ENCODE measurements at regions of chr3 and their contacts with region 1.

Region 1: DNA sequence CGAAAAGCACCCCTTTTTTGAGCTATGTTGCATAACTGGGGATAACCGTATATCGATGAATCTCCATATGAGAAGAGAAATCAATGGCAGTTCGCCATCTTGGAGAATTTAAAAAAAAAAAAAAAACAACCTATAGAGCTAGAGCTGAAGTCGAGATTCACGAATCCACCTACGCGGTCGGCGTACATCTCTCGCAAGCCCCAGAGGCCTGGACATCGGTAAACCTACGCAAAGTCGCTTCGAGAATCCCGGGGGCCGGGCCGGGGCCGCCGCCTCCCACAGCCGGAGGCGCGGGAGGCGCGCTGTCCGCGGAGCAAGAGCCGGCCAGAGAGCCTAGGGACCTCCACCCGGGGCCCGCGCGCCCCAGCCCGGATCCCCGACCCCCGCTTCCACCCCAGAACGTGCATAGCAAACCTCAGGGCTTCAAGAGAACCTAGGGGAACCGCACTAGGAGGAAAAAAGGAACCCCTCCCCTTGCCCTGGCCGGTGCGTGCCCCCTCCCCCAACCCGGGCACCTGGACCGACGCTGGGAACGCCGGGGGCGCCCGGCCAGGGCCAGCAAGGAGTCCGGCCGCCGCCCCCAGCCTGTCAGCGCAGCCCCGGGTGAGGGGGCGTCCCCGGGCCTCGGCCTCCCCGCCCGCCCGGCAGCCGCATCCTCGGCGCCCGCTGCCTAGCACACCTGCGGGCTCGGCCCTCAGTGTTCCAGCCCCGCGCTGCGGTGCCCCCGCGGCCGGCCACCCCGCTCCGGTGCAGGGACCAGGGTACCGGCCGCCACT is 567 bp downstream of the PFN2 start:
- DNase-seq: peak in 1 of 2 experiments; percentile 83
- H3K4me3 ChIP-seq: peak overlapping the region; percentile 79 to 92 (median 88)
- H3K27ac ChIP-seq: peak overlapping the region; percentile 95
- H3K4me1 ChIP-seq: peaks cover 0 to 12% (median 3%) of the 10 kb centered on the region in 4 experiments; a peak in 4 of 7 replicates
- H3K27me3 ChIP-seq: no peaks in the 10 kb centered on the region
- CTCF ChIP-seq: no peak
- EP300 ChIP-seq: no peak
- POLR2A ChIP-seq: peak; percentile 39 to 68
- RAD21 ChIP-seq: no peak

Region 2: DNA sequence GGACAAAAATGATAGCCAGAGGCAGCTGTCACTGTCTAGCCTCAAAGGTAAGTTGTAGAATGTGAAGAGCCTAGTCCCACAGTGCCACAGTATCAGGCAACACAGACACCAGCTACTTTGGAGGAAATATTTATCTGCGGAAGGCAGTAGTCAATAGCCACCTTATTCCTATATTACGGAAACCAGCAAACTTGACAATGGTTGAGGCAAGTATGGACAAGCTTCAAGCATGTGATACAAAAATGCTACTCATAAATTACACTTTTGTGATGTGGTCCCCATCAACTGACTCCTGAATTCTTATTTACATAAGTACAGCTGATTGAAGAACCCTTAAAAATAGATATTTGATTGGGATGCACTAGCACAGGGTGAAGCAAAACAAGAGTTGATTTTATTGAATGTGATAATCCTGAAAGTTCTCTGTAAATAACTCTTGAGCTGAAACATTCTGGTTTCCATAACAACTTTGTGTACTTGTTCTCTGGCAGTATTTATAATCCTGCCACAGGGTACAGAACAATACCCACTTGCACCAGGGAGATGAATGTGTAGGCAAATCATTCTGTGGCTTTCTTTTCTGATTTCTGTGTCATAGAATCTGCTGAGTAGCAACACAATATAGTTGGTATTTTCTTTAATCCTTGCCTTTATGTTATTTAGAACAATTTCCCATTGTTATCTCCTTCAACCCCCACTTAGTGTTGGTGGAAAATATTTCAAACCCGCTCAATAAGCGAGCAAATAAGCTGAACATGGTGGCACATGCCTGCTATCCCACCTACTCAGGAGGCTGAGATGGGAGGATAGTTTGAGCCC is 177.5 kb before region 1 on chr3 and contains the start of gene ANKUB1:
- CTCF ChIA-PET with region 1: no interaction called
- POLR2A ChIA-PET with region 1: no interaction called
- DNase-seq: no peak
- H3K4me3 ChIP-seq: no peak within 1 kb of the TSS
- H3K27ac ChIP-seq: no peak within 1 kb of the TSS
- H3K4me1 ChIP-seq: no peaks in the 10 kb centered on the region
- H3K27me3 ChIP-seq: no peaks in the 10 kb centered on the region
- CTCF ChIP-seq: no peak
- EP300 ChIP-seq: no peak
- POLR2A ChIP-seq: no peak
- RAD21 ChIP-seq: no peak
- total RNA-seq, gene ANKUB1: not detected in 2 replicates

Region 3: DNA sequence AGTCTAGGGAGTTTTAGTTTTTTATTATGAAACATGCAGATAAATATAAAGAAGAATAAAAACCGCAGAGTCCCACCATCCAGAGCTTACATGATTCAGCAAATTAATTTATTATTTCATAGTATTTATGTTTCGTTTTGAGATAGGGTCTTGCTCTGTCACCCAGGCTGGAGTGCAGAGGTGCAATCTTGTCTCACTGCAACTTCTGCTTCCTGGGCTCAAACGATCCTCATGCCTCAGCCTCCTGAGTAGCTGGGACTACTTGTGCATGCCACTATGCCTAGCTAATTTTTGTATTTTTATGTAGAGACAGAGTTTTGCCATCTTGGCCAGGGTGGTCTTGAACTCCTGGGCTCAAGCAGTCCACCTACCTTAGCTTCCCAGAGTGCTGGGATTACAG is 143.5 kb before region 1 on chr3:
- CTCF ChIA-PET with region 1: no interaction called
- POLR2A ChIA-PET with region 1: no interaction called
- DNase-seq: no peak
- H3K4me3 ChIP-seq: 0 out of 8 replicates have a peak overlapping the region, but pooled peaks of 1 of the 4 experiments have one; percentile 14
- H3K27ac ChIP-seq: no peak overlapping the region
- H3K4me1 ChIP-seq: peaks cover 0 to 8% (median 2%) of the 10 kb centered on the region in 4 experiments; a peak in 4 of 7 replicates
- H3K27me3 ChIP-seq: no peaks in the 10 kb centered on the region
- CTCF ChIP-seq: no peak
- EP300 ChIP-seq: no peak
- POLR2A ChIP-seq: no peak
- RAD21 ChIP-seq: no peak

Region 4: DNA sequence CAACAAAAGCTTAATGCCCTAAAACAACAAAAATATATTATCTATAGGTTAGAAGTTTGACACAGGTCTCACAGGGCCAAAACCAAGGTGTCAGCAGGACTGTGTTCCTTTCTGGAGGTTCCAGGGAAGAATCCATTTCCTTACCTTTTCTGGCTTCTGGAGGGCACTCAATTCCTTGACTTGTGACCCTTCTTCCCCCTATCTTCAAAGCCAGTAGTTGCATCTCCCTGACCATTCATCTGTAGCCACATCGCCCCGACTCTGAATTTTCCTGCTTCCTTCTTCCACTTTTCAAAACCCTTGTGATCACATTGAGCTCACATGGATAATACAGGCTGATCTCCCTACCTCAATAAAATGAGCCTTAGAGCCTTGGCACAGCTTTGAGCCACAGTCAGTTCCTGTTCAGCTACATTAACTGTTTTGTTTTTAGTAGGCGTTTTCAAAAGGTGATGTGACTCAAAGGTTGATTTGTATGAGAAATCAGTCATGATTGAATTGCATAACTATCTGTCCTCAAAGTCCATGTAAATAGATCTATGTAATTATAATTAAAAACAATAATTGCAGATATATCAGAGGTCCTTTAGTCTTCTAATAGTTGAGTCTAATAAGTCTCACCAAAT is 11.8 kb before region 1 on chr3:
- CTCF ChIA-PET with region 1: interaction called, 21 read pairs
- POLR2A ChIA-PET with region 1: interaction called, 20 read pairs
- DNase-seq: no peak
- H3K4me3 ChIP-seq: no peak overlapping the region
- H3K27ac ChIP-seq: no peak overlapping the region
- H3K4me1 ChIP-seq: peaks cover 0 to 4% (median 2%) of the 10 kb centered on the region in 4 experiments; a peak in 3 of 7 replicates
- H3K27me3 ChIP-seq: no peaks in the 10 kb centered on the region
- CTCF ChIP-seq: peak in 1 of 3 experiments; percentile 52; a peak in 2 of 4 replicates
- EP300 ChIP-seq: no peak
- POLR2A ChIP-seq: peak in 1 of 2 experiments; percentile 38; a peak in 1 of 3 replicates
- RAD21 ChIP-seq: peak; percentile 1 to 32; a peak in 1 of 4 replicates

Region 5: DNA sequence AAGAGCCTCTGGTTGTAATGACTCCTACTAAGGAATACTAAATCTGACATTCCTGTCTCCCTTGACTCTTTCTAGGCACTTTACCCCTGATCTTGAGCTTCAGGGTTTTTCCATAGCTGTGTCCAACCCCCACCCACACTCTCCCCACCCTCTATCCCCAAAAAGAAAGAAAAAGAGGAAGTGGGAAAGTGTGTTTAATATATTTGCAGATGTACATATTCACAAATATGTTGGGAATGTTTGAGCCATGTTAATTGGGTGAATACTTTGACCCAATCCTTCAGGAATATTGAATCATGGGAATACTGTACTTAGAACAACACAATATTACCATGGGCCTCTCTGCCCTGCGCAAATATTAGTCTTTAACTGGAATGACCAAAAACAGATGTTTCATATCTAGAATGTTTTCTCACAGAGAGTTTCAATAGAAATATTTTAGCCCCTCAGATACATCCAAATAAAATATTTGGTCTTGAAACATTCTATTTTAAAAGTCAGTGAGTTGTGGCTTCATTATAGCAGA is 20.4 kb after region 1 on chr3:
- CTCF ChIA-PET with region 1: interaction called, 4 read pairs
- POLR2A ChIA-PET with region 1: interaction called, 30 read pairs
- DNase-seq: no peak
- H3K4me3 ChIP-seq: no peak overlapping the region
- H3K27ac ChIP-seq: no peak overlapping the region
- H3K4me1 ChIP-seq: peaks cover 0 to 9% (median 4%) of the 10 kb centered on the region in 4 experiments; a peak in 4 of 7 replicates
- H3K27me3 ChIP-seq: no peaks in the 10 kb centered on the region
- CTCF ChIP-seq: no peak
- EP300 ChIP-seq: no peak
- POLR2A ChIP-seq: no peak
- RAD21 ChIP-seq: no peak

Region 6: DNA sequence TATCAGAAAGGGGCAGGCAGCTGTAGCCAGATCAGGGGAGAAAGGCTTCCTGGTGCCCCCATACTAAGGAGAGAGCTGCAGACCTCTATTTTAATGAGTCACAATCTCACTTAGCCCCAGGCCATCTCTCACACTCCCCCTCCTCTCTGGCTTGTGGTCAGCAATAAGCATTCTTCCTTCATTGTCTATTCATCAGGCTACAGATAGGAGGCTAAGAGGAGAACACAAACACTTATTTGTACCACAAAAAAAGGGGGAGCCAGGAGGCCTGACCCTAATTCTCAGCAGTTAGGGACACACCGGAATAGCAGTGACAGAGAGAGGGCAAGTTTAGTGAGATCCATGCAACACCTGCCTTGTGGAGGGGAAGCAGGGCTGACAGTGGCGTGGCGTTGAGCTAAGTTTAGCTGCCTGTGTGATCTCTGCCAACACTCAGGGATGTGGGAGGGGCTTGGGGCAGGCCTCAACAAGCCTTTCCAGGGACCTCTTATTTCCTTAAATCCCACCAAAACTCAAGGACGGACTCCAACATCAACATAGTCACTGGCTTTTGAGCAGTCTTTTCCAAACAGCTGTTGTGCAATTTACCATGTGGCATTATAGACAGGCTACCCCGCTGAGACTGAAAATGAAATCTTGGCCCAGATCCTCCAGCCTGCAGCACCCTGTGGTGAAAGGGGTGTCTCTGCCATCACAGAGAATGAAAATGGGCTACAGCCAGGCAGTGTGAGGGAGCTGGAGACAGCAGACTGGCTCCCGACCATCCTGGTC is 246.1 kb after region 1 on chr3:
- CTCF ChIA-PET with region 1: interaction called, 75 read pairs
- POLR2A ChIA-PET with region 1: interaction called, 11 read pairs
- DNase-seq: no peak
- H3K4me3 ChIP-seq: no peak overlapping the region
- H3K27ac ChIP-seq: no peak overlapping the region
- H3K4me1 ChIP-seq: peaks cover 0 to 6% (median 5%) of the 10 kb centered on the region in 4 experiments; a peak in 5 of 7 replicates
- H3K27me3 ChIP-seq: no peaks in the 10 kb centered on the region
- CTCF ChIP-seq: no peak
- EP300 ChIP-seq: no peak
- POLR2A ChIP-seq: no peak
- RAD21 ChIP-seq: no peak

Measured in H1 (cell line).